ENCODE measurements at regions of chr22 and their contacts with region 1.

Region 1: DNA sequence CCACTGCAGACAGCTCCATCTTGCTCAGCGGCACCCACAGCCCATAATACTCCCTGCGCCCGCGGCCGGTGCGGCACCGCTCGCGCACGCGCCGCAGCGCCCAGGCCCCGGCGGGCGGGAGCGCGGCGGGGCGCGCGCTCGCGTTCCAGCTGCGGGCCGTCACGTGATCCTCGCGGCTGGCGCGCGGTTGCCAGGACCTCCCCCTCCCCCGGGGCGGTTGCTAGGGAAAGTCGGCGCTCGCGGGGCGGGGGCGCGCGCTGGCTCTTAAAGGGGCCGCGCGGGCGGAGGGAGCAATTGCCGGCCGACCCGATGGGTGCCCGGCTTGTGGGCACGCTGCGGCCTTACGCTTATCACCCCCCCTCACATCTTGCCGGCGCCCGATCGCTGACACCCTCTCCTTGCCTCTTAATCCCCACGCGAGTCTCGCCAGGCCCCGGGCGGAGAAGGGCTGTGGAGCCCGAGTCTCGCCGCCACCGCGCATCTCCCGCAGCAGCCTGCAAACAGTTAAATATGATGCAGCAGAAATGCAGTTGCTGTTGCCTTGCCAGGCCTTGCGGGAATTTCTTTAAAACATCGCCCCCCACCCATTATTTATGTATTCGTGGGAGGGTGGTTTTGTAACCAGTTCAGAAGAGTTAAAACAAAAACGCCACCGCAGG is at the start of gene CBX6:
- DNase-seq: peak; percentile 90 to 98 (median 95)
- ATAC-seq: peak; percentile 89
- H3K4me3 ChIP-seq: peak within 1 kb of the TSS; percentile 98
- H3K4me3 Mint-ChIP-seq: peak within 1 kb of the TSS; percentile 88 to 97 (median 93)
- H3K27ac ChIP-seq: peak within 1 kb of the TSS; percentile 73
- H3K27ac Mint-ChIP-seq: peak within 1 kb of the TSS; percentile 81 to 93 (median 89)
- H3K4me1 ChIP-seq: peaks cover 28 to 34% of the 10 kb centered on the region in 2 donors
- H3K4me1 Mint-ChIP-seq: peaks cover 35 to 55% (median 49%) of the 10 kb centered on the region in 7 donors
- H3K27me3 ChIP-seq: no peaks in the 10 kb centered on the region
- H3K27me3 Mint-ChIP-seq: peaks cover 0 to 18% (median 0%) of the 10 kb centered on the region in 5 donors
- total RNA-seq, gene CBX6: 41.7 to 77.0 (median 73.4) TPM

Region 2: DNA sequence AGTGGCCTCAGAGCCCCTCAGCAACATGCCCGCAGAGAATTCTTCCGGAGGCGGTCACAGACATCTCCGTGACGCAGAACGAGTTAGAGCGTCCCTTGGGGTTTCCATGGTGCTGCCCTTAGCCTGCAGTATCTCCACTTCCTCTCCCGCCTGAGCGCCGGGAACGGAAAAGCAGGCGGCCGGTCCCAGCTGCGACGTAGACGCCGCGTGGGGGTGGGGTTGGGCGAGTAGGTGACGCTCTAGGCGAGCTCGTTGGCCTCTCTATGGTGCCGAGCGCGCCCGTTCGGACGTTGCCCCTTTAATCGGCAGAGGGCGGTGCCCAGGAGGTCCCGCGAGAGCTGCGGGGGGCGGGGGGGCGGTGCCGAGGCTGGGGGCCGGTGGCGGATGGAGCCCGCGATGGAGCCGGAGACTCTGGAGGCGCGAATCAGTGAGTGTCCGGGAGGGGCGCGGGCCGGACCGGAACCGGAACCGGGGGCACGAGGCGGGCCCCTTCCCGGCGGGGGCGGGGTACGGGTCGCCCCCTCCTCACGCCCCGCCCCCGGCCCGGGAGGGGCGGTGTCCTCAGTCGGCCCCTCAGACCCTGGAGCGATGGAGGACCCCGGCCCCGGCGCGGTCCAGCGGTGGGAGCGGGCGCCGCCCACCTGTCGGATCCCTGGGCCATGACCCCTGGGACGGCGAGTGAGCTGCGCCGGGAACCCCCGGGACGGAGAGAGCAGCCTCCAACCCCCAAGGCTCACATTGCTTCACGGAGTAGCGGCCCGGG is 1263.6 kb before region 1 on chr22 and contains the start of gene GGA1:
- CTCF ChIA-PET with region 1: no interaction called
- POLR2A ChIA-PET with region 1: no interaction called
- intact Hi-C with region 1: loop called in 1 of 2 experiments (anchors 5 kb)
- DNase-seq: peak; percentile 92 to 99 (median 97)
- ATAC-seq: peak; percentile 89
- H3K4me3 ChIP-seq: peak within 1 kb of the TSS; percentile 81
- H3K4me3 Mint-ChIP-seq: peak within 1 kb of the TSS; percentile 88 to 97 (median 93)
- H3K27ac ChIP-seq: peak within 1 kb of the TSS; percentile 85
- H3K27ac Mint-ChIP-seq: peak within 1 kb of the TSS; percentile 93 to 99 (median 97)
- H3K4me1 ChIP-seq: peaks cover 46 to 47% of the 10 kb centered on the region in 2 donors
- H3K4me1 Mint-ChIP-seq: peaks cover 36 to 72% (median 57%) of the 10 kb centered on the region in 7 donors
- H3K27me3 ChIP-seq: no peaks in the 10 kb centered on the region
- H3K27me3 Mint-ChIP-seq: peaks cover 0 to 6% (median 0%) of the 10 kb centered on the region in 5 donors
- total RNA-seq, gene GGA1: 64.2 to 124 (median 102) TPM

Region 3: DNA sequence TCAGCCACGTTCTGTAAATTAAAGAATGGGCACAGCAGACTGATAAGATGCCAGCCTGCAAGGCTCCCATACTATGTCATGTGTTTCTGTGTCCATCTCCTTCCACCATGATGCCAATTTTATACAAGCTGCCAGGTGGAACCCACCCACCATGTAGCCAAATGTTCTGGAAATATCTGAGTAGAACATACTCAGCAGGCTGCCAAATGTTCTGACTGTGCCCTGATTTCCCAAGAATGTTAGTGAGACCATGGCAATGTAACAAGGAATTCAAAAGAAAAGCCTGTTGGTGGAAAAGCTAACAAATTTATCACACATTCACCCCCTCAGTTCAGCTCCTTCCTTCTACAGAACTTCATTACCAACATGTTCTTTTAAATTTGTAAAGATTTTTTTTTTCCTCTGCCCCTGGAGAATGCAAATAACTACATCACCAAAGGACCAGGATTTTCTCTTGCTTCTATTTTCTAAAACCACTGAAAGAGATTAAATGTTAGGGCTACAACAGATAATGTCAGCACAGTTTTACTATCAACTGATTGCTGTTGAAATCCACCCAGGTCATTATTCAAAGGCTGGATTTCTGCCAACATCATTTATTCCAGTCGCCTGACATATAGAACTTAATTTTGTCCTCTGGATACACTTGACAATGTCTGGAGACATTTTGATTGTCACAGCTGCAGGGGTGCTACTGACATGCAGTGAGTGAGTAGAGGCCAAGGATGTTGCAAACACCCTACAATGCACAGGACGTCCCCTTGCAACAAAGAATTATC is 305.4 kb before region 1 on chr22:
- CTCF ChIA-PET with region 1: no interaction called
- POLR2A ChIA-PET with region 1: no interaction called
- intact Hi-C with region 1: no loop called
- DNase-seq: no peak
- ATAC-seq: no peak
- H3K4me3 ChIP-seq: no peak overlapping the region
- H3K4me3 Mint-ChIP-seq: no peak overlapping the region
- H3K27ac ChIP-seq: no peak overlapping the region
- H3K27ac Mint-ChIP-seq: peak overlapping the region in 4 of 9 donors; percentile 8 to 65 (median 45)
- H3K4me1 ChIP-seq: peaks cover 7 to 8% of the 10 kb centered on the region in 2 donors
- H3K4me1 Mint-ChIP-seq: peaks cover 7 to 21% (median 17%) of the 10 kb centered on the region in 7 donors
- H3K27me3 ChIP-seq: no peaks in the 10 kb centered on the region
- H3K27me3 Mint-ChIP-seq: no peaks in the 10 kb centered on the region

Region 4: GRCh38 chr22:38793721-38794466 is 78.4 kb before region 1 on chr22 and contains the start of gene DNAL4:
- CTCF ChIA-PET with region 1: no interaction called
- POLR2A ChIA-PET with region 1: no interaction called
- intact Hi-C with region 1: loop called in 1 of 2 experiments (anchors 1 kb)
- DNase-seq: peak; percentile 64 to 95 (median 93)
- ATAC-seq: peak; percentile 99
- H3K4me3 ChIP-seq: peak within 1 kb of the TSS; percentile 75
- H3K4me3 Mint-ChIP-seq: peak within 1 kb of the TSS; percentile 86 to 97 (median 92)
- H3K27ac ChIP-seq: peak within 1 kb of the TSS; percentile 89
- H3K27ac Mint-ChIP-seq: peak within 1 kb of the TSS; percentile 78 to 96 (median 91)
- H3K4me1 ChIP-seq: peaks cover 13 to 26% of the 10 kb centered on the region in 2 donors
- H3K4me1 Mint-ChIP-seq: peaks cover 20 to 44% (median 34%) of the 10 kb centered on the region in 7 donors
- H3K27me3 ChIP-seq: no peaks in the 10 kb centered on the region
- H3K27me3 Mint-ChIP-seq: peaks cover 0 to 27% (median 0%) of the 10 kb centered on the region in 5 donors
- total RNA-seq, gene DNAL4: 5.0 to 11.1 (median 8.9) TPM

Region 5: DNA sequence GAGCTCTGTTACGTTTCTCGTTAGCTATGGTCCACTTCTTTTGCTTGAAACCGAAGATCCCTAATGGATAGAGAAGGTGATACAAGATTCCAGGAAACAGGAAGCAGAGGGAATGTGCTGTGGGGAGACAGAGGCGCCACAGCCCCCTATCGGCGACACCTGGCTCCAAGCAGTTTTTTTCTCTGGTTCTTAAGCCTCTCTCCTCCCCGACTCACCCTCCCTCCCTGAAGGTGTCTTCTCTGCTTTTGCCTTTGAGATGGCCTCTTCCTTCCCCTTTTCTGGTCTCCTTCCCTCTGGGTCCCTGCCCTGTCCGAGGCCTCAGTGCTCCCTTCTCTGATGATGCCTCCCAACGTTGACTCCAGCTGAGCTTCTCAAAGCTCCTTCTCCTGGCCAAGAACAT is 70.9 kb after region 1 on chr22:
- CTCF ChIA-PET with region 1: no interaction called
- POLR2A ChIA-PET with region 1: no interaction called
- intact Hi-C with region 1: no loop called
- DNase-seq: no peak
- ATAC-seq: peak; percentile 36
- H3K4me3 ChIP-seq: no peak overlapping the region
- H3K4me3 Mint-ChIP-seq: peak overlapping the region in 1 of 10 donors; percentile 34
- H3K27ac ChIP-seq: no peak overlapping the region
- H3K27ac Mint-ChIP-seq: peak overlapping the region in 3 of 9 donors; percentile 9 to 56 (median 32)
- H3K4me1 ChIP-seq: peaks cover 9 to 10% of the 10 kb centered on the region in 2 donors
- H3K4me1 Mint-ChIP-seq: peaks cover 16 to 45% (median 22%) of the 10 kb centered on the region in 7 donors
- H3K27me3 ChIP-seq: peaks cover 0 to 6% of the 10 kb centered on the region in 2 donors
- H3K27me3 Mint-ChIP-seq: peaks cover 31 to 63% (median 56%) of the 10 kb centered on the region in 5 donors

Region 6: GRCh38 chr22:38981992-38982927 is 110.0 kb after region 1 on chr22 and contains the start of gene APOBEC3B:
- CTCF ChIA-PET with region 1: interaction called, 4 read pairs
- POLR2A ChIA-PET with region 1: interaction called, 3 read pairs
- intact Hi-C with region 1: loop called (anchors 1 to 5 kb)
- DNase-seq: peak in 7 of 9 donors; percentile 15 to 79 (median 28)
- ATAC-seq: peak; percentile 90
- H3K4me3 ChIP-seq: peak within 1 kb of the TSS; percentile 46
- H3K4me3 Mint-ChIP-seq: peak within 1 kb of the TSS; percentile 75 to 90 (median 86)
- H3K27ac ChIP-seq: no peak within 1 kb of the TSS
- H3K27ac Mint-ChIP-seq: peak within 1 kb of the TSS in 5 of 9 donors; percentile 12 to 98 (median 74)
- H3K4me1 ChIP-seq: peaks cover 0 to 8% of the 10 kb centered on the region in 2 donors
- H3K4me1 Mint-ChIP-seq: peaks cover 10 to 47% (median 12%) of the 10 kb centered on the region in 7 donors
- H3K27me3 ChIP-seq: no peaks in the 10 kb centered on the region
- H3K27me3 Mint-ChIP-seq: peaks cover 0 to 3% (median 0%) of the 10 kb centered on the region in 5 donors
- total RNA-seq, gene APOBEC3B: 0.30 to 16.0 (median 7.1) TPM in 4 of 5 experiments, not detected in the other

Region 7: GRCh38 chr22:39117585-39118191 is 245.4 kb after region 1 on chr22:
- CTCF ChIA-PET with region 1: interaction called, 8 read pairs
- POLR2A ChIA-PET with region 1: interaction called, 4 read pairs
- intact Hi-C with region 1: loop called (anchors 1 kb)
- DNase-seq: peak in 8 of 9 donors; percentile 46 to 69 (median 62)
- ATAC-seq: peak; percentile 77
- H3K4me3 ChIP-seq: no peak overlapping the region
- H3K4me3 Mint-ChIP-seq: peak overlapping the region in 2 of 10 donors; percentile 40 to 47
- H3K27ac ChIP-seq: no peak overlapping the region
- H3K27ac Mint-ChIP-seq: peak overlapping the region in 5 of 9 donors; percentile 3 to 73 (median 59)
- H3K4me1 ChIP-seq: peaks cover 6 to 28% of the 10 kb centered on the region in 2 donors
- H3K4me1 Mint-ChIP-seq: peaks cover 7 to 42% (median 18%) of the 10 kb centered on the region in 7 donors
- H3K27me3 ChIP-seq: no peaks in the 10 kb centered on the region
- H3K27me3 Mint-ChIP-seq: no peaks in the 10 kb centered on the region

Region 8: DNA sequence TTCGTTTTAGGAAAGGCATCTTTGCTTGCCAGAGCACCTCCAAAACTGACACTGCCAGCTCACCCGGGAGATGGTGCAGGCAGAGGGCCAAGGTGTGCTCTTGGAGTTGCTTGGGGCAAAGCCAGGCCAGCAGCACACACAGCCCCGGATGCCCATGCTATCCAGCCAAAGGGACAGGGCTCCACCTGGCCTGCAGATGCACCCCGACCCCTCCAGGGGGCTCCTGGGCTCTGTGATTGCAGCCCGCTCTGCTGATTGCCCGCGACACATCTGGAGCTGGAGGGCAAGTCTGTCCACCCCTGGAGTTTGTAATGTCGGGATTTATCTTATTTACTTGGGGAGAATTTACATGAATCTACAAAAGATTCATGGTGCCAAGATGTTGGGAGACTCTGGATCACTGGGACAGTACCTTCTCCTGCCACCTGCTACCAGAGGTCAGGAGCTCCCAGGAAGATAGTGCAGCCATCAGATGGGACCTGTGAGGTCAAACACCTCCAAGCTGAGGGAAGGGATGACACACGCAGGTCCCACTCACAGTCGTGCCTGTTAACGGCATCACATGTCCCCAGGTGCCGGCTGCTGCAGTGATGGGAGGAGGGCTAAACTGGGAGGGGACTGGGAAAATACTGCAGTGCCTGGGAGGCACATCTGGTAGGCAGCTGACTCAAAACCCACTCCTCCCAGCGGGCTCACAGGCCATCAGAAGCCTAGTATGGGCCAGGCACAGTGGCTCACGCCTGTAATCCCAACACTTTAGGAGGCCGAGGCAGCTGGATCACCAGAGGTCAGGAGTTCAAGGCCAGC is 263.0 kb after region 1 on chr22:
- CTCF ChIA-PET with region 1: no interaction called
- POLR2A ChIA-PET with region 1: no interaction called
- intact Hi-C with region 1: no loop called
- DNase-seq: peak in 6 of 9 donors; percentile 28 to 42 (median 36)
- ATAC-seq: peak; percentile 73
- H3K4me3 ChIP-seq: no peak overlapping the region
- H3K4me3 Mint-ChIP-seq: no peak overlapping the region
- H3K27ac ChIP-seq: no peak overlapping the region
- H3K27ac Mint-ChIP-seq: peak overlapping the region in 3 of 9 donors; percentile 6 to 48 (median 31)
- H3K4me1 ChIP-seq: no peaks in the 10 kb centered on the region
- H3K4me1 Mint-ChIP-seq: peaks cover 0 to 19% (median 9%) of the 10 kb centered on the region in 7 donors
- H3K27me3 ChIP-seq: no peaks in the 10 kb centered on the region
- H3K27me3 Mint-ChIP-seq: no peaks in the 10 kb centered on the region

Region 9: DNA sequence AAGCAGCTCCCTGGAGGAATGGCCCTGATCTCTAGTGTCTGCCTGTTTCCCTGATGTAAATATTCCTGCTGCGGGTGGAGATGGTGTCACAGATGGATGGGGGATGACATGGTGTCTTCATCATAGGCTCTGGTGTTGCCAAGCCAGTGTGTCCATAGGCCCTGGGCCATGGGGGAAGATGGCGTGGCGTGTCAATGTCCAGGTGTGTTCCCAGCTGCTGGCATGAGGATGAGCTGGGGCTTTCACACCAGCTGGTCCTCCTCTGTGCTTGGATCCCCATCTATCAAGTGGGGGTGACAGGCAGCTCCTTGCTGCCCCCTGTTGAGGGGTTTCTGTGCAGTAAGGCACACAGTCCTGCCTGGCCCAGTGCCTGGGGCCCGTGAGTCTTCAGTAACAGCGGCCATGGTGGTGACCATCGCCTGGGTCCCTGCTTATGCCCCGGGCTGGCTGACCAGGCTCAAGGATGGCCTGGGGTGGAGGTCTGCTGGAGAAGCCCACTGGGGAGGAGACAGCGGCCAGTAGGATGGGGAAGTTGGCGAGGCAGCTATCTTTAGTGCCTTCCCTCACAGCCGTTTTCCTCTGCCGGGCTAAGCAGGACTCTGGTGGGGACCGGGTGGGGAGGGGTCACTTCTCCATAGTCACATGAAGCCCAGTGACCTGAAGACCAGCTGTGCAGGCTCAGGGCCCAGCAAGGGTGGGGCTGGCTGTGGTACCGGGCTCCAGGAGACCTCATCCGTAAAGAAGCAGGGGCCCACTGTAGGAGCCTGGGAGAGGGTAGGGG is 434.5 kb after region 1 on chr22:
- CTCF ChIA-PET with region 1: no interaction called
- POLR2A ChIA-PET with region 1: no interaction called
- intact Hi-C with region 1: loop called in 1 of 2 experiments (anchors 2 kb)
- DNase-seq: peak in 5 of 9 donors; percentile 31 to 60 (median 42)
- ATAC-seq: peak; percentile 51
- H3K4me3 ChIP-seq: no peak overlapping the region
- H3K4me3 Mint-ChIP-seq: no peak overlapping the region
- H3K27ac ChIP-seq: no peak overlapping the region
- H3K27ac Mint-ChIP-seq: peak overlapping the region in 3 of 9 donors; percentile 32 to 37 (median 33)
- H3K4me1 ChIP-seq: peaks cover 0 to 5% of the 10 kb centered on the region in 2 donors
- H3K4me1 Mint-ChIP-seq: peaks cover 0 to 13% (median 7%) of the 10 kb centered on the region in 7 donors
- H3K27me3 ChIP-seq: no peaks in the 10 kb centered on the region
- H3K27me3 Mint-ChIP-seq: no peaks in the 10 kb centered on the region